PC-9 (cell line): ENCODE measurements at regions of chr4 and their contacts with region 1.

Region 1: DNA sequence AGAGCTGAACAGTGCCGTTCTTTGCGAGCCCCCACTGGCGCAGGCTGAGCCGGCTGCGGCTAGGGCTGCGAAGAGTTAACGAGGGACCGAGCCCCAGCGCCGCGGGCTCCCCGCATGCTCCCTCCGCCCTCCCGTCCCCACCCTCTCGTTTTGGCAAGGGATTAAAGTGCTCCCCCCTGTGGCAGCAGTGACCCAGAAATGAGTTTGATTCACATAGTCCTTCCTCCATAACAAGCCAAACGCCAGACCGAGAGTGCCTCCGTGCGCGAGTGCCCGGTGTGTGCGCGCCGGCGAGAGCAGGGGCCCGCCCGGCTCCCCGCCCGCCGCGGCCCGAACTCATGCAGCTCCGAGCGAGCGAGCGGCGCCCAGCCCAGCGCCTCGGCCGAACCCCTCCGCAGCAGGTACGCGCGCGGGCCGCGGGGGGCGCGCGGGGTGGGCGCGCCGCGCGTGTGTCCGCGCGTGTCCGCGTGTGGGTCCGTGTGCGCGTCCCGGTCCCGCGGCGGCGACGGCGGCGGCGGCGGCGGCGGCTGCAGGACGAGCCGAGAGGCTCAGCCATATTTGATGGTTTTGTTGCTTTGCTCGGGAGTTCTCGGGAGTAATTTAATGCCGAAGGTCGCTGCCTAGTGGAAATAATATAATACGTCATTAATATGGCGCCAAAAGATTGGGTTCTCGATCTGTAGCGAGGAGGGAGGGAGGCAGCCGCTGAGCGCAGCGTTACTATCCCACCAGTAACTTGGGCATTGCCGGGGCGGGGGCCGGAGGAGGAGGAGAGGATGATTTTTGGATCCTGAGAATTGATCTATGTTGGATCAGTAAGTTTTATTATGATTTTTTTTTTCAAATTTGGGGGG is at the start of gene JADE1:
- DNase-seq: peak; percentile 69 to 90
- H3K4me3 ChIP-seq: peak within 1 kb of the TSS; percentile 84
- H3K27ac ChIP-seq: peak within 1 kb of the TSS; percentile 78
- H3K4me1 ChIP-seq: 0 out of 2 replicates have a peak, but pooled peaks cover 20% of the 10 kb centered on the region
- H3K27me3 ChIP-seq: no peaks in the 10 kb centered on the region
- CTCF ChIP-seq: peak; percentile 62
- total RNA-seq, gene JADE1: 23.1 and 30.7 TPM in 2 replicates

Region 2: GRCh38 chr4:128191115-128191781 is 618.5 kb before region 1 on chr4:
- CTCF ChIA-PET with region 1: no interaction called
- POLR2A ChIA-PET with region 1: no interaction called
- intact Hi-C with region 1: loop called (anchors 2 kb)
- DNase-seq: peak; percentile 45 to 55
- H3K4me3 ChIP-seq: no peak overlapping the region
- H3K27ac ChIP-seq: no peak overlapping the region
- H3K4me1 ChIP-seq: no peaks in the 10 kb centered on the region
- H3K27me3 ChIP-seq: no peaks in the 10 kb centered on the region
- CTCF ChIP-seq: peak; percentile 89

Region 3: DNA sequence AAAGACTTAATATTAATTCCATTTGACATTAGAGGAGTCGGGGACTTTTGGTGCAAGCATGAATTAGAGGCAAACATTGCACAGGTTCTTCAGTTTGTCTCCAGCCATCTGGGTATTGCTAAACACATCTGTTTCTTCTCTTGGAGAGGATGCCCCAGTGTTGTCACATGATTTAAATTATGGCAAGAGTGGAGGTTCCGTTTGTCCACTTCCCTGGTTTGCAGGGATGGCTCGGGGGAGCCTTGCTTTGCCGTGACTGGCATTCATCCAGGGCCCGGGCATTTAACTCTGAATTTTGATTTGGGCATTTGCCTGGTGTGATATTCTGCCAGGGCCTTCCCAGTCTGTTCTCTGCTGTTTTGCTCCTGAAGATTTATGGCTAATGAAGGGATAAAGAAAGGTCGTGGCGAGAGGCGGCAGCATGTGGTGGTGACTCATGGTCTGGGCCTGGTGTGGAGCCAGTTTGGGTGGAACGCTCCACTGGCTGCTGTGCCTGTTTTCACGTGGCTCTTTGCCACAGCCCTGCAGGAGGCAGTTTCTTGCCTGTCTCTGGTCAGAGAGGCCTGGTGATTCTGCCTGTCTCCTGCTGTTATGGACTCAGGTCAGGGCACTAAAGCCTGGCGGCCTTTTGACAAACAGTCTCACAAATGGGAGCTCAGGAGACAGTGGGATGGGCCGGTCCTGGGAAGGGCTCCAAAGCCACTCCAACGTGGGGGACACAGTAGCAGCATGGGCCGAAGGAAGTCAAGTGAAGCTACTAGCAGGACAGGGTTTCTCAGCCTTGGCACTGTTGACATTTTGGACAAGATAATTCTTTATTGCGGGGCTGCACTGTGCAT is 422.7 kb before region 1 on chr4:
- CTCF ChIA-PET with region 1: no interaction called
- POLR2A ChIA-PET with region 1: no interaction called
- intact Hi-C with region 1: loop called (anchors 2 kb)
- DNase-seq: peak; percentile 77 to 87
- H3K4me3 ChIP-seq: no peak overlapping the region
- H3K27ac ChIP-seq: peak overlapping the region; percentile 63
- H3K4me1 ChIP-seq: peaks cover 33% of the 10 kb centered on the region
- H3K27me3 ChIP-seq: no peaks in the 10 kb centered on the region
- CTCF ChIP-seq: no peak

Region 4: GRCh38 chr4:128454281-128455075 is 355.2 kb before region 1 on chr4:
- CTCF ChIA-PET with region 1: interaction called, 4 read pairs
- POLR2A ChIA-PET with region 1: no interaction called
- intact Hi-C with region 1: loop called (anchors 1 kb)
- DNase-seq: peak; percentile 67 to 78
- H3K4me3 ChIP-seq: no peak overlapping the region
- H3K27ac ChIP-seq: no peak overlapping the region
- H3K4me1 ChIP-seq: peaks cover 4% of the 10 kb centered on the region; the same call in 1 of the 2 replicates
- H3K27me3 ChIP-seq: no peaks in the 10 kb centered on the region
- CTCF ChIP-seq: peak; percentile 85

Region 5: DNA sequence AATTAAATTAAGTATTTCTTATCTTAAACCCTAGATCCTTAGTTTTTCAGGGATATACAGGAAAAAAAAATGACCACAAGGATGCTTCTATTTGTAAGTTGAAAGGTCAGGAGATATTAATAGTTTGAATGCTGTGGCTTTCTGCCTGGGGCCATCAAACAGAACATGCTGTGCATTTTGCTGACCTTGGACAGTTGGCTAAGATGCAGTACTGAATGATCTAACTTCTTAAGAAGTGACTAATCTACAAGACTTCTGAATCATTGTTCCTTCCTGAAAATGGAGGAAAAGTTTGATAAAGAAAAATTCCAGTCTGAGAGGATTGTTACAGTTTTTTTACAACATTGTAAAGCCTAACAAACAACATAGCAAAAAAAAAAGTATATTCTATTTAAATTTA is 238.0 kb before region 1 on chr4:
- CTCF ChIA-PET with region 1: interaction called, 8 read pairs
- POLR2A ChIA-PET with region 1: no interaction called
- intact Hi-C with region 1: loop called (anchors 1 kb)
- DNase-seq: peak; percentile 50 to 90
- H3K4me3 ChIP-seq: no peak overlapping the region
- H3K27ac ChIP-seq: no peak overlapping the region
- H3K4me1 ChIP-seq: peaks cover 20% of the 10 kb centered on the region
- H3K27me3 ChIP-seq: no peaks in the 10 kb centered on the region
- CTCF ChIP-seq: no peak

Region 6: DNA sequence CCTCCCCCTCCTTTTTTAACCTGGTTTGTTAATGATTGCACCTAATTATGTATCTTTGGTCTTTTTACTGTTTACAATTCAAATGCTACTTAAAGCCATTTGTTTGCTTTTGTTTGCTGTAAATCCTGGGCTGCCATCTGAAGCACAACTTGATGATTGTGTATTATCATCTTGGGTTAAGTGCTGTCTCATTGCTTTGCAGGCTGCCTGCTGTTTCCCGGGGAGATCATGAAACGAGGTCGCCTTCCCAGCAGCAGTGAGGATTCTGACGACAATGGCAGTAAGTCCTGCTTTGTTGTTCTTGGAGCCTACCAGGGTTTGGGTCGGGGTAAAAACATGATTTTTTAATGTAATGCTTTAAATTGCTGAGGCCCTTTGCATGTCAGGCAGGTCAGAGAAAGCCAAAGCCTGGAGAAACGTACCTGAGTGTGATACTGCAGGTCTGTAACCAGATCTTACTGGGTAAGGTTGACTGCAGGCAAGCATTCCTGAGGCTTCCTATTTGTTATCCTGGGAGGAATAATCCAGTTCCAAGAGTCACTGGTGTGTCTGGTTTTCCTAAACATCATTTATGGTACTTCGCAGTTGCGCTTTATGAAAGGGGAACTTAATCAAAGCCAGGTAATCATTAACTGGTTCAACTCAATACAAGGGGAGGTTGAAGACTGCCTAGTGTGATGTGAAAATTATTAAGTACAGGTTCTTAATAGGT is 22.0 kb after region 1 on chr4:
- CTCF ChIA-PET with region 1: no interaction called
- POLR2A ChIA-PET with region 1: no interaction called
- intact Hi-C with region 1: no loop called
- DNase-seq: no peak
- H3K4me3 ChIP-seq: no peak overlapping the region
- H3K27ac ChIP-seq: no peak overlapping the region
- H3K4me1 ChIP-seq: no peaks in the 10 kb centered on the region
- H3K27me3 ChIP-seq: no peaks in the 10 kb centered on the region
- CTCF ChIP-seq: no peak

Region 7: DNA sequence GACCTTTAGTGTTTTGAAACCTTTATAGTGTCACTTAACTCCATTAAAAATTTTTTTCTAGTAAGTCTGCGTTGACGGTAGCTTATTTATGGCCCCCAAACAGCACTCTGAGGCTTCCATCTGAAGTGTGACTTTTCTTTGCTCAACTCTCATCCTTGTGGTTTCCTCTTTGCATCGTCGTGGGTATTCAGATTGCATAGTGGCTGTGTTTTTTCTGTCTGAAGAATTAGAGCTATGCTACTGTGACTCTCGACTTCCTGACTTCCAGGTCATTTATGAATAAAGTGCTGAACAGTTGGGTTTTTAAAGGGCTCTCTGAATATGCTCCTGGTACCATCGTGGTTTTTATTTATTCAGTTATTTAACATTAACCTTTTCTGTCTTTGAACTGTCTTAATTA is 44.7 kb after region 1 on chr4:
- CTCF ChIA-PET with region 1: interaction called, 10 read pairs
- POLR2A ChIA-PET with region 1: no interaction called
- intact Hi-C with region 1: no loop called
- DNase-seq: no peak
- H3K4me3 ChIP-seq: no peak overlapping the region
- H3K27ac ChIP-seq: no peak overlapping the region
- H3K4me1 ChIP-seq: no peaks in the 10 kb centered on the region
- H3K27me3 ChIP-seq: no peaks in the 10 kb centered on the region
- CTCF ChIP-seq: no peak

Region 8: GRCh38 chr4:129093191-129093920 is 283.7 kb after region 1 on chr4 and contains the start of gene SCLT1:
- CTCF ChIA-PET with region 1: interaction called, 6 read pairs
- POLR2A ChIA-PET with region 1: no interaction called
- intact Hi-C with region 1: loop called (anchors 2 kb)
- DNase-seq: peak; percentile 90 to 97
- H3K4me3 ChIP-seq: peak within 1 kb of the TSS; percentile 77
- H3K27ac ChIP-seq: peak within 1 kb of the TSS; percentile 72
- H3K4me1 ChIP-seq: peaks cover 18% of the 10 kb centered on the region
- H3K27me3 ChIP-seq: no peaks in the 10 kb centered on the region
- CTCF ChIP-seq: no peak
- total RNA-seq, gene SCLT1: 15.9 and 16.9 TPM in 2 replicates